ENCODE measurements at regions of chr11 and their contacts with region 1.

Region 1: DNA sequence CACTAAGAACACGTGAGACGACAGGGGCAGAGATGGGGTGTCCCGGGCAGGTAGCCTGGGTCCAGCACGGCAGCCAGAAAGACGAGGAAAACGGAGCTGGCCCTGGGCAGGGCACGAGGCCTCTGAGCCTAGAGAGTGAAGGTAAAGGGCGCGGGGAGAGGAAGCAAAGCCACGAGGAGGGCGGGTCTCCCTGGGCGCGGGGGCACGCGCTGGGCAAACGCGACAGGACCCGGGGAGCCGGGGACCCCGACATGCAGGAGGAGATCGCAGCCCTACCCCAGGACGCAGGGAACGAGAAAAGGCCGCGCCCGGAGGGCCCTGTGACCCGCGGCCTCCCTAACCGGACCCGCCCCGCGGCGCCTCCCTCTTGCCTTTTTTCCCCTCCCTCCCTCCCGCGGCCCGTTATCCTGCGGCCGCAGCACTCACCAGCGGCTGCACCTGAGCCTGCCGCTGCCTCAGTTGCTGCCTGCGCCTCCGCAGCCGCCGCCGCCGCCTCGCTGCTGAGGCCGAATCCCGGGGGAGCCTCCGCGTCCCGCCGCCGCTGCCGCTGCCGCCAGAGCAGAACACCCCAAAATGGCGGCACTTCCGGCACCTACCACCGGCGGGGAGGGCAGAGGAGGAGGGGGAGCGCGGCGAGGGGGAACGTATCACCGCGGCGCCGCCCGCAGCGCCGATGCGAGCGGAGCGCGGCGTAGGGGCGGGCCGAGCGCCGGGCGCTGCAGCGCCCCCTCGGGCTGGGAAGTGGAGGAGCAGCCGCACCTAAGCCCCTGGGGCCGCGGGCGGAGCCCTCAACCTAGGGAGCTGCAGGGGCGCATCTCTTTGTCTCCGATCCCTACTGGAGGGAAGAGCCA is at the start of gene CELF1:
- DNase-seq: peak; percentile 92 to 94 (median 93)
- H3K4me3 ChIP-seq: peak within 1 kb of the TSS; percentile 85 to 91
- H3K4me3 Mint-ChIP-seq: peak within 1 kb of the TSS; percentile 94 to 98 (median 96)
- H3K27ac ChIP-seq: peak within 1 kb of the TSS; percentile 88
- H3K27ac Mint-ChIP-seq: peak within 1 kb of the TSS; percentile 93 to 98 (median 97)
- H3K4me1 ChIP-seq: peaks cover 50% of the 10 kb centered on the region
- H3K4me1 Mint-ChIP-seq: peaks cover 30 to 51% (median 40%) of the 10 kb centered on the region in 4 donors
- H3K27me3 ChIP-seq: no peaks in the 10 kb centered on the region
- H3K27me3 Mint-ChIP-seq: no peaks in the 10 kb centered on the region
- total RNA-seq, gene CELF1: 145 to 149 TPM

Region 2: GRCh38 chr11:47523468-47524225 is 29.1 kb before region 1 on chr11:
- CTCF ChIA-PET with region 1: interaction called, 4 read pairs
- POLR2A ChIA-PET with region 1: interaction called, 4 read pairs
- intact Hi-C with region 1: loop called (anchors 1 kb)
- DNase-seq: peak in 4 of 5 donors; percentile 32 to 74 (median 48)
- H3K4me3 ChIP-seq: peak overlapping the region in 1 of 2 donors; percentile 8
- H3K4me3 Mint-ChIP-seq: peak overlapping the region; percentile 28 to 81 (median 67)
- H3K27ac ChIP-seq: peak overlapping the region; percentile 55
- H3K27ac Mint-ChIP-seq: peak overlapping the region; percentile 69 to 92 (median 89)
- H3K4me1 ChIP-seq: peaks cover 72% of the 10 kb centered on the region
- H3K4me1 Mint-ChIP-seq: peaks cover 50 to 86% (median 67%) of the 10 kb centered on the region in 4 donors
- H3K27me3 ChIP-seq: no peaks in the 10 kb centered on the region
- H3K27me3 Mint-ChIP-seq: no peaks in the 10 kb centered on the region

Region 3: DNA sequence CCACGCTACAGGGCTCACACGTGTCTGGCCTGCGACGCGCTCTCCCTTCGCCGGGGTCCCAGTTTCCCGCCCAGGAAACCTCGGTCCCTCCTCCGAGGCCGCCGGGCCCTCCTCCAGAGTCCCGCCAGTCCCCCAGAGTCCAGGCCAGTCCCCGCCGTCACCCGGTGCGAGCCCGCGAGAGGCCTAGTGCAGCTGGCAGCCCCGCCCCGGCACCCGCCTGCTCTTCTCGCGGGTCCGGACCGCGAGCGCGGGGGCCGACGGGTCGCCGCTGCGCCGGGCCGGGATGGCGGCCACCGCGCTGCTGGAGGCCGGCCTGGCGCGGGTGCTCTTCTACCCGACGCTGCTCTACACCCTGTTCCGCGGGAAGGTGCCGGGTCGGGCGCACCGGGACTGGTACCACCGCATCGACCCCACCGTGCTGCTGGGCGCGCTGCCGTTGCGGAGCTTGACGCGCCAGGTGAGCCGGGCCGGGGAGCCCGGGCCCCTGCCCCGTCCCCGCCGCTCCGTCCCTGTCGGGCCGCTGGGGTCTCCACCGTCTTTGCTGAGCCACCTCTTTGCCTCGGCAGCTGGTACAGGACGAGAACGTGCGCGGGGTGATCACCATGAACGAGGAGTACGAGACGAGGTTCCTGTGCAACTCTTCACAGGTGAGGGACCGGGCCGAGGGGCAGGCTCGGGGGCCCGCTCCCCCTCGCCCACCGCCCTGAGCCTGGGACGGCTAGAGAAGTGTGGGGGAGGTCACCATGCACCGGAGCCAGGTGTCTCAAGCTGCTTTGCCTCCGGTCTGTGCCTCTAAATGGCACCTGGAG is 12.8 kb after region 1 on chr11 and contains the start of gene PTPMT1:
- CTCF ChIA-PET with region 1: interaction called, 14 read pairs
- POLR2A ChIA-PET with region 1: interaction called, 44 read pairs
- intact Hi-C with region 1: loop called (anchors 1 kb)
- DNase-seq: peak; percentile 59 to 75 (median 63)
- H3K4me3 ChIP-seq: peak within 1 kb of the TSS; percentile 61 to 87
- H3K4me3 Mint-ChIP-seq: peak within 1 kb of the TSS; percentile 76 to 88 (median 85)
- H3K27ac ChIP-seq: peak within 1 kb of the TSS; percentile 73
- H3K27ac Mint-ChIP-seq: peak within 1 kb of the TSS; percentile 73 to 92 (median 88)
- H3K4me1 ChIP-seq: peaks cover 13% of the 10 kb centered on the region
- H3K4me1 Mint-ChIP-seq: peaks cover 9 to 25% (median 18%) of the 10 kb centered on the region in 4 donors
- H3K27me3 ChIP-seq: no peaks in the 10 kb centered on the region
- H3K27me3 Mint-ChIP-seq: no peaks in the 10 kb centered on the region
- total RNA-seq, gene PTPMT1: 21.5 to 21.9 TPM

Region 4: GRCh38 chr11:47642099-47642855 is 89.5 kb after region 1 on chr11 and contains the start of gene MTCH2:
- CTCF ChIA-PET with region 1: interaction called, 3 read pairs
- POLR2A ChIA-PET with region 1: no interaction called
- intact Hi-C with region 1: loop called (anchors 1 kb)
- DNase-seq: peak; percentile 95 to 96 (median 96)
- H3K4me3 ChIP-seq: peak within 1 kb of the TSS; percentile 86 to 90
- H3K4me3 Mint-ChIP-seq: peak within 1 kb of the TSS; percentile 82 to 98 (median 96)
- H3K27ac ChIP-seq: peak within 1 kb of the TSS; percentile 93
- H3K27ac Mint-ChIP-seq: peak within 1 kb of the TSS; percentile 84 to 99 (median 98)
- H3K4me1 ChIP-seq: peaks cover 23% of the 10 kb centered on the region
- H3K4me1 Mint-ChIP-seq: peaks cover 11 to 31% (median 18%) of the 10 kb centered on the region in 4 donors
- H3K27me3 ChIP-seq: no peaks in the 10 kb centered on the region
- H3K27me3 Mint-ChIP-seq: no peaks in the 10 kb centered on the region
- total RNA-seq, gene MTCH2: 23.6 to 23.9 TPM